Activated B cell treated with CpG ODN at 0.5 μM for 24 hours (primary cell): ENCODE measurements at regions of chr9 and their contacts with region 1.

Region 1: DNA sequence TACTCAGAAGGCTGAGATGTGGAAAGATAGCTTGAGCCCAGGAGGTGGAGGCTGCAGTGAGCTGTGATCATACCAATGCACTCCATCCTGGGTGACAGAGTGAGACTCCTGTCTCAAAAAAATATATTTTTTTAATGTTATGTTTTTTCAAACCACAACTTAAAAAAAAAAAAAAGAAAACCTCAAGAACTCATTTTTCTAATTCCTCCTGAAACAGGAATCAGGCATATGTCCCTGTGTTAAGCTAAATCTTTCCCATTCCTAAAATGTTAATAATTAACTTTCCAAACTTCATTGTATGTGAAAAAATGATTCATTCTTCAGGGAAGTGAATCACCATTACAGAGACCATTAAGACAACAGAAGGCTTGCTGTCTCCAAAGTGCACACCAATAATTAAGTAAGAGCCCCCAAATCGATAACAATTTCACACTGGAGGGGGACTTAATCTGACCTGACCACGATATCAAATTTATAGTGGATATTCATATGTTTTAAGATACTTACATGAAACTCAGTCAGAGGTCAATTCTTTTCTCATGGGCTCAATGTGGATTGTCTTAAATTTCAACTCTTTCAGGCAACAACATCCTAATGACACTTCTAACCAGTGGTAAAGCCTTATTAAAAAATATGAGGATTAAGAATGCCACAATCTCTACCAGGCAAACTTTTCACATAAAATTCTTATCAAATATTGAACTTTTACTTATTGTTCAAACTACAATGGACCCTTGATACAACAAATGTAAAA is 5.2 kb downstream of the CEMIP2 start:
- DNase-seq: no peak
- ATAC-seq: no peak
- H3K4me3 Mint-ChIP-seq: no peak overlapping the region
- H3K27ac Mint-ChIP-seq: no peak overlapping the region
- H3K4me1 Mint-ChIP-seq: peaks cover 86% of the 10 kb centered on the region
- H3K27me3 Mint-ChIP-seq: no peaks in the 10 kb centered on the region
- CTCF ChIP-seq: no peak

Region 2: GRCh38 chr9:71748280-71748743 is 14.8 kb before region 1 on chr9:
- CTCF ChIA-PET with region 1: interaction called, 3 read pairs
- POLR2A ChIA-PET with region 1: no interaction called
- intact Hi-C with region 1: loop called (anchors 2 kb)
- DNase-seq: no peak
- ATAC-seq: no peak
- H3K4me3 Mint-ChIP-seq: no peak overlapping the region
- H3K27ac Mint-ChIP-seq: no peak overlapping the region
- H3K4me1 Mint-ChIP-seq: peaks cover 34% of the 10 kb centered on the region
- H3K27me3 Mint-ChIP-seq: no peaks in the 10 kb centered on the region
- CTCF ChIP-seq: no peak